Transverse colon (tissue), 4 donors: ENCODE measurements at regions of chr17 and their contacts with region 1.

Region 1: DNA sequence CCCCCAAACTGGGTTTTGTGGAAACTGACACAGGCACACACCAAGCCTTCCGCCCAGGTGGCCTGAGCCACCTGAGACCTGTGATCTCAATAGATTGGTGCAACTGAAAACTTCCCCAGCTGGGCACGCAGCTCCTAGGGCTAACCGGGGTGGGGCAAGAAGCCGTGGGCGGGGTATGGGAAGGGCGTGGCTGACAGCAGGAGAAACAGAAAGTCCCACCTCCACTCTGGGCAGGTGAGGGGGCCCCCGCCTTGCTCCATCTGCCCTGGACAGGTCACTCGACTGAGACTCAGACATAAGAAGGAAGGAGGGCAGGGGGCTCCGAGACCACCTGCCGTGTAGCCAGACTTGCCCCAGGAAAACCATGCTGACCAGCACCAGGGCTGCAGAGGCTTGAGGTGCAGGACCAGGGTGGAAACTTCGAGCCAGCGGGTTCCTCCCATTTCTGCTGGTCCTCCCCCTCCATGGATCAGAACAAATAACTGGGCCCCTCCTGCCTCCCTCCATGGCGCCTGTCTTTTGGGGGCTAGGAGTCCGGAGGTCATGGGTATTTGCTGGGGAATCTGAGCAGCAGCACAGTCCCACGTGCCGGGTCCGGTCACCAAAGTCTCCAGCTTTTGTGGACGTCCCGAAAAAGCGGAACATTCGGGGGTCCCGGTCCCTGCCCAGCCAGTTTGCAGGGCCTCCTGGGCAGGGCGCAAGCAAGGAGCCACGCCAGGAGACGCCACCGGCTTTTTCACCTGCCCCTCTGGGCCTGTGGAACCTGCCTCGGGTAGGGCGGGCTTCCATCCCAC is 1.3 kb downstream of the TIMP2 start:
- DNase-seq: peak; percentile 92
- H3K4me3 ChIP-seq: peak overlapping the region; percentile 70 to 85 (median 74)
- H3K27ac ChIP-seq: peak overlapping the region; percentile 92 to 99 (median 95)
- H3K4me1 ChIP-seq: peaks cover 24 to 62% (median 56%) of the 10 kb centered on the region in 4 donors
- H3K27me3 ChIP-seq: peaks cover 14% of the 10 kb centered on the region
- CTCF ChIP-seq: no peak
- EP300 ChIP-seq: no peak
- POLR2A ChIP-seq: peak; percentile 32

Region 2: GRCh38 chr17:78889531-78889930 is 34.3 kb before region 1 on chr17:
- in situ Hi-C with region 1: no loop called
- intact Hi-C with region 1: loop called (anchors 5 kb)
- DNase-seq: peak; percentile 43
- H3K4me3 ChIP-seq: no peak overlapping the region
- H3K27ac ChIP-seq: peak overlapping the region; percentile 53 to 75 (median 62)
- H3K4me1 ChIP-seq: peaks cover 17 to 73% (median 43%) of the 10 kb centered on the region in 4 donors
- H3K27me3 ChIP-seq: no peaks in the 10 kb centered on the region
- CTCF ChIP-seq: no peak
- EP300 ChIP-seq: no peak
- POLR2A ChIP-seq: no peak

Region 3: DNA sequence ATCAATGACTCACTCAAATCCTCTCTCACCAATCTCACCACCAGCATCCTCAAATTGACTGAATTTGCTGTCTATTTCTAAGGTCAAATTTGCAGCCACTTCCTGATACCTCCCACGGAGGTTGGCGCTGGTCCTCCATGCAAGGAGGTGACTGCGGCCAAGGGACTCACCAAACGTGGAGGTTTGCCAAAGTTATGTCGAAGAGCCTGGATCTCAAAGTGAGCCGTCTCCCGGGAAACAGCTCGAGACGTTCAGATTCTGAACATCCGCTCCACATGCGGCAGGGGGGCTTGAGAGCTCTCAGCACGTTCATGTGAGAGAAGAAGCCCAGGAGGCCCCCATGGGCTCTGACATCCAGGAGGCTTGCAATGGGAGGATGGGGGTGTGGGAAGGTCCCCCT is 33.3 kb after region 1 on chr17:
- in situ Hi-C with region 1: no loop called
- intact Hi-C with region 1: no loop called
- DNase-seq: no peak
- H3K4me3 ChIP-seq: no peak overlapping the region
- H3K27ac ChIP-seq: no peak overlapping the region
- H3K4me1 ChIP-seq: peaks cover 3 to 21% (median 8%) of the 10 kb centered on the region in 4 donors
- H3K27me3 ChIP-seq: no peaks in the 10 kb centered on the region
- CTCF ChIP-seq: no peak
- EP300 ChIP-seq: no peak
- POLR2A ChIP-seq: no peak

Region 4: DNA sequence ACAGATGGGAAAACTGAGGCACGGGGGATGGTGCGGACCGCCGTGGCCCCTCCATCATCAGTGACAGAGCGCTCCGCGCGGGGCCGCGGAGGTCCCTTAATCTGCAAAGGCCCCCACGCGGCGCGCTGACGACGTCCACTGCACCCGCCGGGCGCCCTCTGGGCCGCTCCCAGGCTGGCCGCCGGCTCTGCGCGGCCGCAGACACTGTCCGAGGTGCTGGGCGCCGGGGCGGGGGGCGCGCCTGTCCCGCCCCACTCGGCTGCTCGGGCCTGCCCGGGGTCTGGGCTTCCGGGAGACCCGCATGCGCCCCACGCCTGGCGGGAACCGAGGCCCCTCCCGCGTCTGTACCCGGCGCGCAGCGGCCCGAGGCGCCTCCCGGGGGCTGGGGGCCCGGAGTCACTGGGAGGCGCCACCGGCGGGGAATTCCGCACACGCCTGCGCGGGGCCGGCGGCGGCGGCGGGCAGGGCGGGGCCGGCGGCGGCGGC is 1336.3 kb after region 1 on chr17:
- in situ Hi-C with region 1: no loop called
- intact Hi-C with region 1: no loop called
- DNase-seq: peak; percentile 73
- H3K4me3 ChIP-seq: peak overlapping the region; percentile 21 to 84 (median 74)
- H3K27ac ChIP-seq: peak overlapping the region; percentile 90 to 96 (median 96)
- H3K4me1 ChIP-seq: peaks cover 15 to 73% (median 44%) of the 10 kb centered on the region in 4 donors
- H3K27me3 ChIP-seq: no peaks in the 10 kb centered on the region
- CTCF ChIP-seq: peak in 1 of 5 experiments; percentile 9
- EP300 ChIP-seq: no peak
- POLR2A ChIP-seq: no peak